ENCODE measurements at regions of chr16 and their contacts with region 1.

Region 1: GRCh38 chr16:57734925-57735754 is 430 bp upstream of the KATNB1 start:
- DNase-seq: peak; percentile 99 to 100
- H3K4me3 ChIP-seq: peak overlapping the region; percentile 82
- H3K4me3 Mint-ChIP-seq: peak overlapping the region; percentile 86
- H3K27ac Mint-ChIP-seq: peak overlapping the region; percentile 87
- H3K4me1 ChIP-seq: peaks cover 11% of the 10 kb centered on the region
- H3K4me1 Mint-ChIP-seq: peaks cover 13% of the 10 kb centered on the region
- H3K27me3 ChIP-seq: no peaks in the 10 kb centered on the region
- H3K27me3 Mint-ChIP-seq: no peaks in the 10 kb centered on the region
- CTCF ChIP-seq: no peak

Region 2: DNA sequence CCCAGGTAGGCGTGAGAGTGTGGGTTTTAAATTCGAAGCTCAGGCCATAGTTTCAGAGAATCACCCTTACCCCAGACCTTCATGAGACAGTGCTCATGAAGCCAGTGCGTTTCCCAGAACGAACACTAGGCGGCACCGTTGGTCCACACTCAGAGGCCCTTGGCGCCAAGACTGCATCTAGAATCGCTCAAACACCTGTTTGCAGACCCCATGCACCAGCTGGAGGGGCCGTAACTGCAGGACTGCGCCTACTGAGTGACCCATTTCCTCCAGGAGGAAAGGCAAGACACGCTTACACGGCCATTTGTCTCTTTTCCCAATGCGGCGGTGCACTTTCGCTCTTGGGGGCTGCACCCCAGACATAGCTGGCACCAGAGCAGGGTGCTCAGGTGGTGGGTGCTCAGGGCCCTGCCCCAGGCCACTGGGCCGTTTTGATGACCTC is 158.7 kb before region 1 on chr16:
- CTCF ChIA-PET with region 1: interaction called, 9 read pairs
- POLR2A ChIA-PET with region 1: no interaction called
- intact Hi-C with region 1: loop called (anchors 5 kb)
- DNase-seq: peak; percentile 74 to 82
- H3K4me3 ChIP-seq: no peak overlapping the region
- H3K4me3 Mint-ChIP-seq: no peak overlapping the region
- H3K27ac Mint-ChIP-seq: no peak overlapping the region
- H3K4me1 ChIP-seq: 0 out of 2 replicates have a peak, but pooled peaks cover 4% of the 10 kb centered on the region
- H3K4me1 Mint-ChIP-seq: no peaks in the 10 kb centered on the region
- H3K27me3 ChIP-seq: no peaks in the 10 kb centered on the region
- H3K27me3 Mint-ChIP-seq: no peaks in the 10 kb centered on the region
- CTCF ChIP-seq: peak; percentile 97

Region 3: GRCh38 chr16:57600048-57600835 is 134.9 kb before region 1 on chr16:
- CTCF ChIA-PET with region 1: interaction called, 11 read pairs
- POLR2A ChIA-PET with region 1: no interaction called
- intact Hi-C with region 1: no loop called
- DNase-seq: peak; percentile 84 to 88
- H3K4me3 ChIP-seq: no peak overlapping the region
- H3K4me3 Mint-ChIP-seq: no peak overlapping the region
- H3K27ac Mint-ChIP-seq: no peak overlapping the region
- H3K4me1 ChIP-seq: peaks cover 3% of the 10 kb centered on the region; the same call in 1 of the 2 replicates
- H3K4me1 Mint-ChIP-seq: no peaks in the 10 kb centered on the region
- H3K27me3 ChIP-seq: no peaks in the 10 kb centered on the region
- H3K27me3 Mint-ChIP-seq: no peaks in the 10 kb centered on the region
- CTCF ChIP-seq: peak; percentile 92 to 98

Region 4: GRCh38 chr16:57648590-57649442 is 86.3 kb before region 1 on chr16:
- CTCF ChIA-PET with region 1: interaction called, 7 read pairs
- POLR2A ChIA-PET with region 1: no interaction called
- intact Hi-C with region 1: loop called (anchors 5 kb)
- DNase-seq: peak; percentile 85 to 93
- H3K4me3 ChIP-seq: no peak overlapping the region
- H3K4me3 Mint-ChIP-seq: no peak overlapping the region
- H3K27ac Mint-ChIP-seq: no peak overlapping the region
- H3K4me1 ChIP-seq: peaks cover 10% of the 10 kb centered on the region; the same call in 1 of the 2 replicates
- H3K4me1 Mint-ChIP-seq: peaks cover 14% of the 10 kb centered on the region
- H3K27me3 ChIP-seq: no peaks in the 10 kb centered on the region
- H3K27me3 Mint-ChIP-seq: no peaks in the 10 kb centered on the region
- CTCF ChIP-seq: peak; percentile 100

Region 5: GRCh38 chr16:57700781-57701551 is 34.2 kb before region 1 on chr16:
- CTCF ChIA-PET with region 1: interaction called, 18 read pairs
- POLR2A ChIA-PET with region 1: interaction called, 18 read pairs
- intact Hi-C with region 1: loop called (anchors 1 kb)
- DNase-seq: peak; percentile 86 to 88
- H3K4me3 ChIP-seq: no peak overlapping the region
- H3K4me3 Mint-ChIP-seq: peak overlapping the region; percentile 45
- H3K27ac Mint-ChIP-seq: peak overlapping the region; percentile 97
- H3K4me1 ChIP-seq: peaks cover 63% of the 10 kb centered on the region
- H3K4me1 Mint-ChIP-seq: peaks cover 35% of the 10 kb centered on the region
- H3K27me3 ChIP-seq: no peaks in the 10 kb centered on the region
- H3K27me3 Mint-ChIP-seq: no peaks in the 10 kb centered on the region
- CTCF ChIP-seq: no peak

Region 6: GRCh38 chr16:57757326-57757786 is 22.2 kb after region 1 on chr16:
- CTCF ChIA-PET with region 1: interaction called, 4 read pairs
- POLR2A ChIA-PET with region 1: no interaction called
- intact Hi-C with region 1: loop called (anchors 2 kb)
- DNase-seq: peak; percentile 89 to 97
- H3K4me3 ChIP-seq: no peak overlapping the region
- H3K4me3 Mint-ChIP-seq: no peak overlapping the region
- H3K27ac Mint-ChIP-seq: no peak overlapping the region
- H3K4me1 ChIP-seq: peaks cover 17% of the 10 kb centered on the region
- H3K4me1 Mint-ChIP-seq: peaks cover 20% of the 10 kb centered on the region
- H3K27me3 ChIP-seq: no peaks in the 10 kb centered on the region
- H3K27me3 Mint-ChIP-seq: no peaks in the 10 kb centered on the region
- CTCF ChIP-seq: peak; percentile 95 to 99

Region 7: DNA sequence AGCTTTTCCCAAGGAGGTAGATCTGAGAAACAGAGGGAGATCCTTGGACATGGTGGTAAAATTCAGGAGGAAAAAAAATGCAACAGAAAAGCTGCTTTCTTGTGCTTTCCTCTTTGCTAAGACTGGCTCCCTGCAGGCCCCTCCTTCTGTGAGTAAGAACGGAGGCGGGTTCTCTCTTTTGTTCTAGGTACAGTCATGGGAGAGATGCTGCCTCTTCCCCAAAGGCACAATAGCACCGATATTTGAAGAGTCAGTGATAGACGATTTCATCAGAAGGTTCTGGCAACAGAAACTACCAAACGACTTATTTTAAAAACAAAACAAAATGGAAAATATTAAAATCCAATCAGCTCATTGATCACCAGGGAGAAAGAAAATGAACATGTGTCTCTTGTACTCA is 99.8 kb after region 1 on chr16:
- CTCF ChIA-PET with region 1: no interaction called
- POLR2A ChIA-PET with region 1: no interaction called
- intact Hi-C with region 1: no loop called
- DNase-seq: no peak
- H3K4me3 ChIP-seq: no peak overlapping the region
- H3K4me3 Mint-ChIP-seq: no peak overlapping the region
- H3K27ac Mint-ChIP-seq: no peak overlapping the region
- H3K4me1 ChIP-seq: peaks cover 12% of the 10 kb centered on the region
- H3K4me1 Mint-ChIP-seq: peaks cover 7% of the 10 kb centered on the region
- H3K27me3 ChIP-seq: no peaks in the 10 kb centered on the region
- H3K27me3 Mint-ChIP-seq: no peaks in the 10 kb centered on the region
- CTCF ChIP-seq: no peak